Activated B cell treated with CpG ODN at 0.5 μM for 24 hours (primary cell): ENCODE measurements at regions of chr20 and their contacts with region 1.

Region 1: DNA sequence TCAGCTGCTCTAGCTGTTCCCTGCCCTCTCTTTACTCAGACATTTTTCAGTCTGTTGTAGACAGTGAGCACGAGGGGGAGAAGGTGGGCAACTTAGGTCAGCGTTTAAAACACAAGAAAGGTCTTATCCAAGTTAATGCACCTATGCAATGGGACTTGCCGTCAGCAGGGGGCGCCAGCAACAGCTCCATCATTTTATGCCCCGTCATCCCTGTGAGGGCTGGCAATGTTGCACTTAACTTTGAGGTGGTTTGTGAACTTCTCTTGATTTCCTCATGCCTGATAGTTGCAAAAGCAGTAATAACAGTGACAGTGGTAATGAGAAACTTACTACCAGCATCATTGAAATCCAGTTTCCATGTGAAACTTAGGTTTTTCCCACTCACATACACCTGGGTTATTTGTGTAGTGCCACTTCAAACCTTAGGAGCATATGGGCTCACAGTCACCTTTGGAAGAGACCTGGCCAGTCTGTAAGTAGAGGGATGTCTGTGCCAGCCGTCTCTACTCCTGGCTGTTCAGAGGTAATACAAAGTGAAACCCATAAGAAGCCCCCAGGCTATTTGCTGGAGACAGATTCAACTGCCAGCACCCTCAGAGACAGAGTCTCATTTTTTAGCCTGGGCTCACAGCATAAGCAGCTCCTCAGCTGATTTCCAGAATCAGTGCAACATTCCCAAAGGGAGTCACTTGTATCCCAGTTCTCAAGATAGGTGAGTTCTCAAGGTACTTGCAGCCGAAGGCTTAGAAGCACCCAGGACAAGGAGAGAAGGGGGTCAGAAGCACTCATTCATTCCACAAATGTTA is 44.8 kb upstream of the ID1 start:
- DNase-seq: peak; percentile 61
- ATAC-seq: peak; percentile 67
- H3K4me3 Mint-ChIP-seq: no peak overlapping the region
- H3K27ac Mint-ChIP-seq: no peak overlapping the region
- H3K4me1 Mint-ChIP-seq: peaks cover 4% of the 10 kb centered on the region
- H3K27me3 Mint-ChIP-seq: no peaks in the 10 kb centered on the region
- CTCF ChIP-seq: peak; percentile 82

Region 2: GRCh38 chr20:31527266-31527665 is 33.0 kb before region 1 on chr20:
- CTCF ChIA-PET with region 1: no interaction called
- POLR2A ChIA-PET with region 1: no interaction called
- intact Hi-C with region 1: loop called (anchors 1 kb)
- DNase-seq: no peak
- ATAC-seq: no peak
- H3K4me3 Mint-ChIP-seq: no peak overlapping the region
- H3K27ac Mint-ChIP-seq: no peak overlapping the region
- H3K4me1 Mint-ChIP-seq: peaks cover 4% of the 10 kb centered on the region
- H3K27me3 Mint-ChIP-seq: no peaks in the 10 kb centered on the region
- CTCF ChIP-seq: no peak

Region 3: DNA sequence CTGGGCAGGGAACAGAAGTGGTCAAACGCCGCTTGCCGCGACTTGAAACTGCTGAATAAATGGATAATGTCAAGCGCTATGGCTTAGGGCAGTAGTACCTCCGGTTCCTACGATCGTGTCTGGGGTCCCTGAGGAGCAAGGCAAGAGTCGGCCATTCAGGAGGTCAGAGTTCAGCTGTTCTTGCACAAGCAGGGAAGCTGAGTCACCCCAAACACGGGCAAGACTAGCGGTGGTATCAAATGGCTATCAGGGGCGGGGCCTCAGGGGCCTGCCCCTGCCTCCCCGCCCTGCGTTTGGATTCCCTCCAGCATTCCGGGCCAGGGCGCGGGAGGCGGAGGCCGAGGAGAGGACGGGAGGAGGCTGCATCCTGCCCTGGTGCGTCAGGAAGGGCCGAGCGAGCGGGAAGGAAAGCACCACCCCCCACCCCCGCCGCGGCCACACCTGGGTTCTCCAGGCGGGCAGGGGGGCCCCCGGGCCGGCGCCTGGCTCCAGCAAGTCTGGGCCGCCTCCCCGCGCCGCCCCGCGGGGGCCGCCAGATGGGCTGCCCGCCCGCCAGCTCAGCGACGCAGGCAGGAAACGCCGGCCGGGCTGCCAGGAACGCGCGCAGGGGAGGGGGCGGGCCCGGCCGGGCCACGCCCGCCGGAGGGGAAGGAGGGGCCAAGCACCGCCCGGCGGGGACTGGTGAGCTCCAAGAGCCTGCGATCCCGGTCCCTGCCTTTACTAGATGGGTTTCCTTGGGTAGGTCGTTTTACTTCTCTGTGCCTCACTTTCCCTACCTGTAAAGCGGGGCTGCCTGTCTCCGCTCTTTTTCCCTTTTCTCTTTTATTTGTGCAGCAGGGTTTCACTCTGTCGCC is 12.6 kb after region 1 on chr20:
- CTCF ChIA-PET with region 1: interaction called, 22 read pairs
- POLR2A ChIA-PET with region 1: interaction called, 3 read pairs
- intact Hi-C with region 1: loop called (anchors 1 kb)
- DNase-seq: peak; percentile 75
- ATAC-seq: peak; percentile 91
- H3K4me3 Mint-ChIP-seq: peak overlapping the region; percentile 88
- H3K27ac Mint-ChIP-seq: peak overlapping the region; percentile 79
- H3K4me1 Mint-ChIP-seq: peaks cover 18% of the 10 kb centered on the region
- H3K27me3 Mint-ChIP-seq: no peaks in the 10 kb centered on the region
- CTCF ChIP-seq: no peak

Region 4: GRCh38 chr20:31587545-31588389 is 27.5 kb after region 1 on chr20:
- CTCF ChIA-PET with region 1: interaction called, 3 read pairs
- POLR2A ChIA-PET with region 1: interaction called, 15 read pairs
- intact Hi-C with region 1: no loop called
- DNase-seq: no peak
- ATAC-seq: peak; percentile 61
- H3K4me3 Mint-ChIP-seq: peak overlapping the region; percentile 78
- H3K27ac Mint-ChIP-seq: no peak overlapping the region
- H3K4me1 Mint-ChIP-seq: peaks cover 8% of the 10 kb centered on the region
- H3K27me3 Mint-ChIP-seq: peaks cover 24% of the 10 kb centered on the region
- CTCF ChIP-seq: no peak

Region 5: DNA sequence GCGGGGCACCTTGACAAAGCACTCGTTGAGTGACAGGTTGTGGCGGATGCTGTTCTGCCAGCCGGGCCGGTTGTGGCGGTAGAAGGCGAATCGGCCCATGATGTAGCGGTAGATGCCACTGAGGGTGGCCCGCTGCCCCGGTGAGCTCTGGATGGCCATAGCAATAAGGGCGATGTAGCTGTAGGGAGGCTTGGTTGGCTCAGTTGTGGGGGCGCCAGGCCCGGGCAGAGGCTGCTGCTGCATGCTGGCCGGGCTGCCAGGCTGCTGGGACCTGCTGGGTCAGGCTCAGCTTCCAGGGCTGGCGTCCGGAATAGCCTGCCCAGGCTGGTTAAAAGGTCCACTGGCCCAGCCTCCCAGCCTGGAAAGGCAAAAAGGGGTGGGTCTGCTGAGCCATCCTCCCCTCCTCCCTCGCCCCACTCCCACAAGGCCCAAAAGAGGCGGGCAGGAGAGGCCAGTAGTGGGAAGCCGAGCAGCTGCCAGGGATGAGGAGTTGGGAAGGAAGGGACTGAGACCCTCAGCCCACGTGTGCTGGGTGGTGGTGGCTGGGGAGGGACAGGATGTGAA is 285.1 kb after region 1 on chr20 and contains the start of gene FOXS1:
- CTCF ChIA-PET with region 1: no interaction called
- POLR2A ChIA-PET with region 1: no interaction called
- intact Hi-C with region 1: loop called (anchors 5 kb)
- DNase-seq: no peak
- ATAC-seq: no peak
- H3K4me3 Mint-ChIP-seq: no peak within 1 kb of the TSS
- H3K27ac Mint-ChIP-seq: no peak within 1 kb of the TSS
- H3K4me1 Mint-ChIP-seq: no peaks in the 10 kb centered on the region
- H3K27me3 Mint-ChIP-seq: peaks cover 10% of the 10 kb centered on the region
- CTCF ChIP-seq: no peak
- total RNA-seq, gene FOXS1: not detected in 2 replicates

Region 6: DNA sequence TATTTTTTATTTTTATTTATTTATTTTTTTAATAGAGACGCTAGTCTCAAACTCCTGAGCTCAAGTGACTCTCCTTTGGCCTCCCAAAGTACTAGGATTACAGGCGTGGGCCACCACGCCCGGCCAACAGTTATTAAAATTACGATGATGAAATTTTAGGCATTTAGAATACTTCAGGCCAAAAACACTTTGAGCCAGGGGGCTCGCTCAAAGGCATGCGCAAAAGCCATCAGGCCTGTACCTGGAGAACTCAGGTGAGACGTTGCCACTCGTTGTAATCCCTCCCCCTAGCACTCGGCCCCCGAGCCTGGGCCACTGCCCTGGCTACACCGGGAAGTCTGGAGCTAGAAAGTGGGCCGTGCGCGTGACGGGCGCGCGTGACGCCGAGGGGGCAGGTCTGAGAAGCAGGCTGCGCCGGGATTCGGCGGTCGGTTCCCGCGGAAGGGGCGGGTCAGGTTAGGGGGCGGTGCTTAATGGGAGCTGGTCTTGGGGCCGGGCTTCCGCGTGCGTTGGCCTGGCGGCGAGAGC is 1929.3 kb after region 1 on chr20:
- CTCF ChIA-PET with region 1: no interaction called
- POLR2A ChIA-PET with region 1: no interaction called
- intact Hi-C with region 1: no loop called
- DNase-seq: peak; percentile 99
- ATAC-seq: peak; percentile 96
- H3K4me3 Mint-ChIP-seq: peak overlapping the region; percentile 84
- H3K27ac Mint-ChIP-seq: peak overlapping the region; percentile 88
- H3K4me1 Mint-ChIP-seq: peaks cover 15% of the 10 kb centered on the region
- H3K27me3 Mint-ChIP-seq: no peaks in the 10 kb centered on the region
- CTCF ChIP-seq: no peak